ENCODE measurements at regions of chr5 and their contacts with region 1.

Region 1: DNA sequence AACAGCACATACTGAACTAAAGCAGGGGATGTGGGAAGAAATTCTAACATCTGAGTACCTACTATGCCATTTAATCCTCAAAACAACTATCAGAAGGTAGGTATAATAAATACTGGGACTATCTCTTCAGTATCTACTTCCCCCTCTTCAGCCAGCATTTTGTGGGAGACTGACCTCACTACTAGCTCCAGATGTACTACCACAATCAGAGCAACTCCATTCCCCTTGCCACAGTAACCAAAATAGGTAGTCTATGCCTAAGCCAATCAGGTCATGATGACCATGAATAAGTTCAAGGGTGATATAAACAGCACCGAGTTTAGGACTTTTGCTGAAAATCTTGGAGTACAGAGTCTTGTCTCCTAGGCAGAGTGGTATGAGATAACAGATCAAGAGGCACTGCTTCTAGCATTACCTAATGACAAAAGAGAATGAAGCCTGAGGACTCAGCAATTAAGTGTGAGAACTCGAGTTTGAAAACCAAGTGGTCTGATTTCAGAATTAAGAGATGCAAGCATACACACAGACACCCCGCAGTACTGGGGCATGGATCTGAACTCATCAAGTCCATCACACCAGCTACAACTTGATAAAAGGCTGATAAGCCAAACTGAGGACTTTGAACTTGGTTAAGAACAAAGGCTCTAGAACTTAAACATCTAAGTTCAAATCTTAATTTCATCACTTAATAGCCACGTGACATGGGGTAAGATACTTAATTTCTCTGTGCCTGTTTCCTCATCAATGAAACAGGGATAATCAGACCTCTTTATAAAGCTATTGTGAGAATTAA is 9.7 kb downstream of the FNIP1 start:
- DNase-seq: no peak
- ATAC-seq: no peak
- H3K4me3 ChIP-seq: no peak overlapping the region
- H3K4me3 Mint-ChIP-seq: peak overlapping the region in 2 of 10 donors; percentile 8 to 21
- H3K27ac ChIP-seq: no peak overlapping the region
- H3K27ac Mint-ChIP-seq: peak overlapping the region in 1 of 9 donors; percentile 29
- H3K4me1 ChIP-seq: peaks cover 0 to 11% of the 10 kb centered on the region in 2 donors
- H3K4me1 Mint-ChIP-seq: peaks cover 32 to 76% (median 69%) of the 10 kb centered on the region in 7 donors
- H3K27me3 ChIP-seq: no peaks in the 10 kb centered on the region
- H3K27me3 Mint-ChIP-seq: no peaks in the 10 kb centered on the region

Region 2: GRCh38 chr5:131769961-131770360 is 17.1 kb before region 1 on chr5:
- CTCF ChIA-PET with region 1: no interaction called
- POLR2A ChIA-PET with region 1: no interaction called
- intact Hi-C with region 1: loop called in 1 of 2 experiments (anchors 2 kb)
- DNase-seq: no peak
- ATAC-seq: no peak
- H3K4me3 ChIP-seq: no peak overlapping the region
- H3K4me3 Mint-ChIP-seq: no peak overlapping the region
- H3K27ac ChIP-seq: no peak overlapping the region
- H3K27ac Mint-ChIP-seq: no peak overlapping the region
- H3K4me1 ChIP-seq: no peaks in the 10 kb centered on the region
- H3K4me1 Mint-ChIP-seq: peaks cover 5 to 24% (median 19%) of the 10 kb centered on the region in 7 donors
- H3K27me3 ChIP-seq: no peaks in the 10 kb centered on the region
- H3K27me3 Mint-ChIP-seq: no peaks in the 10 kb centered on the region